AG04449 (cell line): ENCODE measurements at regions of chr7 and their contacts with region 1.

Region 1: DNA sequence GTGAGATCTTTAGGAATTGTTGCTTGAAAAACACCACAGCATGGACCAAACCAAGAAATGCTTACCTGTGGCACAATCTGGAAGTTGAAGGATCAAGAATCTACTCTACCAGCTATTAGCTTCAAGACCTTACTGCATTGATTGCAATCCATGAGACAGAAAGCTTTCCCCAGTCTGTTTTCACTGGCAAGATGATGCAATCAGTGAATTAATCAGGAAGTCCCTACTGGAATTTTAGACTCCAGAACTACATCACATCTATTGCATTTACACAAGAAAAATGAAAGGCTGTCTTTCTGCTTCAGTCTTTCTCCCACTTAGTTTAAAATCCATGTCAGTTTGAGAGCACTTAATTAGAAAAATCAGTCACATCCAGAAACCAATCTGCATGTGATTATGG is 191.7 kb downstream of the TFEC start:
- DNase-seq: no peak
- H3K4me3 ChIP-seq: no peak overlapping the region
- CTCF ChIP-seq: no peak

Region 2: DNA sequence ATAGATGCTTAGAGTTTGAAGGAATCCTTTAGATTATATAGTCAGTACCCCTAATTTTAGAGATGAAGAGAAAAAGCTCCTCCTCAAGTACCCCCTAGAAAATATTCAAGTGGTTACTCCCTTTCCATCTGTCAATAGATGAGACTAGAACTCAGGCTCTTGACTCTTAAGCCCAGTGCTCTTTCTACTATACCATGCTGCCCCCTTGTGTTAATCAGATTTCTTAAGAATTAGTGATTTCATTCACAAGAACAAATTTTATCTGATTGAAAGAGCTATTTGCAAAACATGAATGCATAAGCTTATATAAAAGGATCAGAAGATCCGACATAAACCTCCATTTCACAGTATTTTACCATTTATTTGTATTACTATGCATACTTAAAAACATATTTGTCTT is 12.5 kb after region 1 on chr7:
- CTCF ChIA-PET with region 1: interaction called, 10 read pairs
- POLR2A ChIA-PET with region 1: no interaction called
- DNase-seq: no peak
- H3K4me3 ChIP-seq: no peak overlapping the region
- CTCF ChIP-seq: peak; percentile 8

Region 3: DNA sequence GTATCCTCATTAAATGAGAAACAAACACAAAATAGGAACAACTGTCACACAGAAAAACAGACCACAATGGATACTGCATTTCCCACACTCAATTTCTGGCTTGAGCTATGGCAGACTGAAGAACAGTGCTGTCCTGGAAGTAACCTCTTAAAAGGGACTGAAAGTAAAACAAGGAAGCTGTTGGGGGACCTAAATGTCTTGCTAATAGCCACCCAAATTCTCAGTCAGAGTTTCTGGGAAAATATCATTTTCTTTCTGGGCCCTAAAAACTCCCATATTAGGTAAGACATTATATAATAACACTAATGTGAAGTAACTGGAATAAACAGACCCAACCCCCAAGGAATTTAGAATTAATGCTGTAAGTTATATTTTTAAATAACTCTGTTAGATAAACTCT is 272.6 kb after region 1 on chr7:
- CTCF ChIA-PET with region 1: no interaction called
- POLR2A ChIA-PET with region 1: no interaction called
- DNase-seq: no peak
- H3K4me3 ChIP-seq: no peak overlapping the region
- CTCF ChIP-seq: no peak